MCF 10A (cell line): ENCODE measurements at regions of chr20 and their contacts with region 1.

Region 1: GRCh38 chr20:50070991-50071888 is 41.7 kb downstream of the UBE2V1 start:
- DNase-seq: peak; percentile 82
- H3K4me3 Mint-ChIP-seq: peak overlapping the region; percentile 50
- H3K27ac Mint-ChIP-seq: no peak overlapping the region
- H3K4me1 Mint-ChIP-seq: peaks cover 6% of the 10 kb centered on the region
- H3K27me3 Mint-ChIP-seq: no peaks in the 10 kb centered on the region
- CTCF ChIP-seq: peak; percentile 98

Region 2: GRCh38 chr20:49610701-49611538 is 460.3 kb before region 1 on chr20:
- CTCF ChIA-PET with region 1: interaction called, 10 read pairs
- POLR2A ChIA-PET with region 1: interaction called, 5 read pairs
- intact Hi-C with region 1: no loop called
- DNase-seq: peak; percentile 72
- H3K4me3 Mint-ChIP-seq: no peak overlapping the region
- H3K27ac Mint-ChIP-seq: no peak overlapping the region
- H3K4me1 Mint-ChIP-seq: peaks cover 12% of the 10 kb centered on the region
- H3K27me3 Mint-ChIP-seq: no peaks in the 10 kb centered on the region
- CTCF ChIP-seq: peak; percentile 96

Region 3: GRCh38 chr20:49964964-49965780 is 106.1 kb before region 1 on chr20:
- CTCF ChIA-PET with region 1: interaction called, 582 read pairs
- POLR2A ChIA-PET with region 1: no interaction called
- intact Hi-C with region 1: no loop called
- DNase-seq: peak; percentile 53
- H3K4me3 Mint-ChIP-seq: no peak overlapping the region
- H3K27ac Mint-ChIP-seq: no peak overlapping the region
- H3K4me1 Mint-ChIP-seq: peaks cover 14% of the 10 kb centered on the region
- H3K27me3 Mint-ChIP-seq: no peaks in the 10 kb centered on the region
- CTCF ChIP-seq: peak; percentile 39

Region 4: GRCh38 chr20:50012282-50013263 is 58.7 kb before region 1 on chr20:
- CTCF ChIA-PET with region 1: interaction called, 23 read pairs
- POLR2A ChIA-PET with region 1: no interaction called
- intact Hi-C with region 1: no loop called
- DNase-seq: no peak
- H3K4me3 Mint-ChIP-seq: no peak overlapping the region
- H3K27ac Mint-ChIP-seq: no peak overlapping the region
- H3K4me1 Mint-ChIP-seq: no peaks in the 10 kb centered on the region
- H3K27me3 Mint-ChIP-seq: no peaks in the 10 kb centered on the region
- CTCF ChIP-seq: no peak

Region 5: DNA sequence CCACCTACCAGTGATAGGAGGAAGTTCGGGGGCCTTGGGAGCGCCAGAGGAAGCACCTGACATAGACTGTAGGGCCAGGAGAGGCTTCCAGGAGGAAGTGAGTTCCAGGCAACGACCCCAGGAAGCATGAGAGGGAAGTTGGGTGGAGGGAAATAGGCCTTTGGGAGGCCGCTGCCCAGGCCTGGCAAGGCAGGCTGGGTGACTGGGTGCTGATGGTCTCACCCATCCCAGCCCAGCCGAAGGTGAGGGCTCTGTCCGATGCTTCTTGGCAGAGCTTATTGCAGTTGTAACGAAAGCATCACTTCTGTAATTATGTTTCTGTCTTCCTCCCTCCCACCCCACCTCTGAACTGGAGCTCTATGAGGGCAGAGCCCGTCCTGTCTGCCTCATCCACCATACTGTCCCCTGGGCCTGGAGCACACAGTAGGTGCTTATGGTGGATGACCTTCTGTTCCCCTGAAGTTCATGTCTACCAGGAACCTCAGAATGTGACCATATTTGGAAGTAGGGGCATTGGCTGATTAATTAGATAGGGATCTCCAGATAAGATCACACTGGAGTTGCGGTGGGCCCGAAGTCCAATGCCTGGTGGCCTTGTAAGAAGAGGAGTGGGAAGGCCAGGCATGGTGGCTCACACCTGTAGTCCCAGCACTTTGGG is 12.4 kb before region 1 on chr20:
- CTCF ChIA-PET with region 1: interaction called, 50 read pairs
- POLR2A ChIA-PET with region 1: no interaction called
- intact Hi-C with region 1: no loop called
- DNase-seq: no peak
- H3K4me3 Mint-ChIP-seq: no peak overlapping the region
- H3K27ac Mint-ChIP-seq: no peak overlapping the region
- H3K4me1 Mint-ChIP-seq: no peaks in the 10 kb centered on the region
- H3K27me3 Mint-ChIP-seq: no peaks in the 10 kb centered on the region
- CTCF ChIP-seq: no peak

Region 6: DNA sequence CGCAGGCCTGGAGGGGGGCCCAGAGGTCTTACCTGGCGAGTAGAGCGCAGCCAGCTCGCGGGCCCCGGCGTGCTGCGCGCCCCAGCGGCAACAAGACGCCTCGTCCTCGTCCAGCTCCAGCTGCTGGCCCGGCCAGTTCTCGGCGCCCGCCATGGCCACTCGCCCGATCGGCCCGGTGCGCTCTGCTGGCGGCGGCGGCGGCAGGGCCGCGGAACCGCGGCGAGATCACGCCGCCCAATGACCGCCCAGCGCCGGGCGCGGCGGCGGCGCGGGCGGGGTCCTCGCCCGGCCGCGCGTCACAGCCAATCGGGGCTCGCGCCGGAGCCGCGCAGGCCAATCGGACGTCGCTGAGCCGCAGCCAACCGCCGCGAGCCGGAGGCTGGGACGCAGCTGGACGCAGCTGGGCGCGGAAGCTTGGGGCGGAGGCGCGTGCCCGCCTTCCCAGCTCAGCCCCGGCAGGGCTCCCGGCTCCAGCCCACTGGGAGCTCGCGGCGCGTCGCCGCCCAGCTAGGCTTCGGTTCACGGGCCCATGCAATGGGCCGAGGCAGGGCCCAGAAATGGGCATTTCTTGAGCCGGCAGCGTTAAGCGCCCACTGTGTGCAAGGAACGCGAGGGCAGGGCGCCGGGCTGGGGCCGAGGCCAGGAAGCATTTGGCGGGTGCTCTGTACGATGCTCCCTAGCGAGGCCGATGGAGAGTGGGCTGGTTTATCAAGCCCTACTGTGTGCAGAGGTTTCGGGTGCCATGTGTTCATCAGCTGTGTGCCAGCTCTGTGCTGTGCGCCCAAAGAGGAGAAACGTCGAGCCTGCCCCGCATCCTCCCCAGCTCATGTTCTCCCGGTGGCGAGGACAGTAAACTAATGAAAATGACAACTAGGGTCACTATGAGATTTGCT is 82.5 kb after region 1 on chr20 and contains the start of gene PEDS1:
- CTCF ChIA-PET with region 1: interaction called, 16 read pairs
- POLR2A ChIA-PET with region 1: interaction called, 8 read pairs
- intact Hi-C with region 1: no loop called
- DNase-seq: peak; percentile 85
- H3K4me3 Mint-ChIP-seq: peak within 1 kb of the TSS; percentile 87
- H3K27ac Mint-ChIP-seq: peak within 1 kb of the TSS; percentile 94
- H3K4me1 Mint-ChIP-seq: peaks cover 44% of the 10 kb centered on the region
- H3K27me3 Mint-ChIP-seq: no peaks in the 10 kb centered on the region
- CTCF ChIP-seq: no peak
- total RNA-seq, gene PEDS1: 26.0 and 30.5 TPM in 2 replicates

Region 7: GRCh38 chr20:50460460-50461267 is 389.4 kb after region 1 on chr20:
- CTCF ChIA-PET with region 1: no interaction called
- POLR2A ChIA-PET with region 1: no interaction called
- intact Hi-C with region 1: no loop called
- DNase-seq: peak; percentile 91
- H3K4me3 Mint-ChIP-seq: peak overlapping the region; percentile 32
- H3K27ac Mint-ChIP-seq: peak overlapping the region; percentile 84
- H3K4me1 Mint-ChIP-seq: peaks cover 23% of the 10 kb centered on the region
- H3K27me3 Mint-ChIP-seq: no peaks in the 10 kb centered on the region
- CTCF ChIP-seq: peak; percentile 94